ENCODE measurements at regions of chr5 and their contacts with region 1.

Region 1: DNA sequence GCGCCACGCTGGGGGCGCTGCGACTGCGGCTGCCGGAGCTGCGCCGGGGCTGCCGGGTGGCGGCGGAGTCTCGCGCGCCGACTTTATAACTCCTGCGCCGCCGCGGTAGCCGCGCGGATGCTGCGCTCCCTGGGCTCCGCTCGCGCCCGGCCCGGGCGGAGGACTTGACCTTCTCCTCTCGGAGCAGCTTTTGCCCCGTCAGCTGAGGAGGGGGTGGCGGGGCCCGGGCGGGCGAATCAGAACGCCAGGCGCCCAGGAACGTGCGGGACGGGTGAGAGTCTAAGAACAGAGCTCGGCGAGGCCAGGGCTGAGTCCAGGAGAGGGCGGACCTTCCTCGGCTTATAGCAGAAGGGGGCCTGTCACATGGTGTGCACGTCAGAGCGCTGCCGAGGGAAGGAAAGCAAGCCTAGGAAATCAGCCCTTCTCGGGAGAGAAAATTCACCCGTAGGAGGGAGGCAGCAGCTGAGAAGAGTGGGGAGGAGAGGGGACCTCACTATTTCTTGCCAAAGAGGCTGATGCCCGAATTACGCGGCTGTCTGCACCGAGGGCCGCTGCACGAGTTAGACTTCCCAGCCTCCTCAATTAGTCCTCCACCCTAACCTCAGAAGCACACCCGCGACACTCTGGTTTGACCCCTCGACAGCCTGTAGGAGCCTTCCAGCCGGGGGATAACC is at the start of gene FOXD1:
- H3K4me3 ChIP-seq: peak within 1 kb of the TSS; percentile 78
- H3K27ac ChIP-seq: peak within 1 kb of the TSS; percentile 98
- H3K4me1 ChIP-seq: peaks cover 7% of the 10 kb centered on the region
- CTCF ChIP-seq: peak; percentile 68

Region 2: GRCh38 chr5:73088026-73088425 is 360.6 kb before region 1 on chr5:
- CTCF ChIA-PET with region 1: interaction called, 12 read pairs
- POLR2A ChIA-PET with region 1: no interaction called
- H3K4me3 ChIP-seq: no peak overlapping the region
- H3K27ac ChIP-seq: no peak overlapping the region
- H3K4me1 ChIP-seq: no peaks in the 10 kb centered on the region; the same call in 1 of the 2 replicates
- CTCF ChIP-seq: no peak

Region 3: GRCh38 chr5:73437101-73437776 is 11.4 kb before region 1 on chr5:
- CTCF ChIA-PET with region 1: interaction called, 12 read pairs
- POLR2A ChIA-PET with region 1: interaction called, 25 read pairs
- H3K4me3 ChIP-seq: peak overlapping the region; percentile 44
- H3K27ac ChIP-seq: peak overlapping the region; percentile 99
- H3K4me1 ChIP-seq: peaks cover 40% of the 10 kb centered on the region
- CTCF ChIP-seq: peak; percentile 93

Region 4: GRCh38 chr5:73498057-73499008 is 49.7 kb after region 1 on chr5 and contains the start of gene BTF3:
- CTCF ChIA-PET with region 1: interaction called, 5 read pairs
- POLR2A ChIA-PET with region 1: interaction called, 16 read pairs
- H3K4me3 ChIP-seq: peak within 1 kb of the TSS; percentile 100
- H3K27ac ChIP-seq: peak within 1 kb of the TSS; percentile 82
- H3K4me1 ChIP-seq: peaks cover 8% of the 10 kb centered on the region
- CTCF ChIP-seq: peak; percentile 93

Region 5: GRCh38 chr5:73605227-73606020 is 156.8 kb after region 1 on chr5:
- CTCF ChIA-PET with region 1: no interaction called
- POLR2A ChIA-PET with region 1: no interaction called
- H3K4me3 ChIP-seq: no peak overlapping the region
- H3K27ac ChIP-seq: no peak overlapping the region
- H3K4me1 ChIP-seq: no peaks in the 10 kb centered on the region
- CTCF ChIP-seq: no peak

Measured in HEK293 (cell line).